Adrenal gland (tissue), 19 donors: ENCODE measurements at regions of chr14 and their contacts with region 1.

Region 1: GRCh38 chr14:34374980-34375740 is 86.9 kb downstream of the SPTSSA start:
- DNase-seq: no peak
- H3K4me3 ChIP-seq: no peak overlapping the region
- H3K27ac ChIP-seq: no peak overlapping the region
- H3K4me1 ChIP-seq: peaks cover 10 to 18% of the 10 kb centered on the region in 2 donors
- H3K27me3 ChIP-seq: no peaks in the 10 kb centered on the region
- CTCF ChIP-seq: no peak
- POLR2A ChIP-seq: no peak

Region 2: GRCh38 chr14:34237081-34237480 is 138.1 kb before region 1 on chr14:
- intact Hi-C with region 1: no loop called
- DNase-seq: no peak
- H3K4me3 ChIP-seq: no peak overlapping the region
- H3K27ac ChIP-seq: no peak overlapping the region
- H3K4me1 ChIP-seq: no peaks in the 10 kb centered on the region
- H3K27me3 ChIP-seq: no peaks in the 10 kb centered on the region
- CTCF ChIP-seq: no peak
- POLR2A ChIP-seq: no peak

Region 3: DNA sequence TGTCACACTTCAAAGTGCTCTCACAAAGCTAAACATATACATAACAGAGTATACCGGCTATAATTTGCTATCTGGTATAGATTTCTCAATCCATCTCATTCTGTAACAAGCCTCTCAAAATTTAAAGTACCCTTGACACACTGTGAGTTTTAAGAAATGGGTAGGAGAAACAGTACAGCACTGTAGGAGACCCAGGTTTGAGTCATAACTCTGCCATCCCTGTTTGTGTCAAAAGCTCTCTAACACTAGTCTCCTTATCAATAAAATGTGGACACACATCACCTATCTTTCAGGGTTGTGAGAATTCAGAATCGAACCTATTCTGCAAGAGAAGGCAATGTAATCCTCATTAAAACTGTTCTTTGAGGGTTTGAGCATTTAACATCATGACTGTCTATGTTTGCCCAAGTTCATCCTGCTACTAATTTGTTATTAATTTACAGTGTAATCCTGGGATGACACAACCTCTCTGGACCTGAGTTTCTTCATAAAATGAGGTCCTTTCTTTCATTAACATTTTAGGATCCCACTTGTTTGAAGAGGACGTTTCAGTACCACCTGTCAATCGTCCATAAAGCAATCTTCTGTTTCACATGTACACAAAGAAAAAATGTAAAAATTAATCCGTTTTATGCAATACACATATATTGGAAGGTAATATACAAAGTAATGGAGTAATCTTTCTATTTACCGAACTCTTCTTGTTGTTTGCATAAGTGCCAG is 74.8 kb after region 1 on chr14:
- intact Hi-C with region 1: loop called in 1 of 2 experiments (anchors 10 kb)
- DNase-seq: no peak
- H3K4me3 ChIP-seq: no peak overlapping the region
- H3K27ac ChIP-seq: no peak overlapping the region
- H3K4me1 ChIP-seq: peaks cover 0 to 5% of the 10 kb centered on the region in 2 donors
- H3K27me3 ChIP-seq: no peaks in the 10 kb centered on the region
- CTCF ChIP-seq: no peak
- POLR2A ChIP-seq: no peak

Region 4: GRCh38 chr14:34461334-34462131 is 86.4 kb after region 1 on chr14:
- intact Hi-C with region 1: no loop called
- DNase-seq: peak; percentile 58 to 82 (median 68)
- H3K4me3 ChIP-seq: peak overlapping the region; percentile 31 to 98 (median 58)
- H3K27ac ChIP-seq: peak overlapping the region; percentile 62 to 100 (median 91)
- H3K4me1 ChIP-seq: peaks cover 12 to 22% of the 10 kb centered on the region in 2 donors
- H3K27me3 ChIP-seq: no peaks in the 10 kb centered on the region
- CTCF ChIP-seq: no peak
- POLR2A ChIP-seq: no peak